PC-9 (cell line): ENCODE measurements at regions of chr19 and their contacts with region 1.

Region 1: DNA sequence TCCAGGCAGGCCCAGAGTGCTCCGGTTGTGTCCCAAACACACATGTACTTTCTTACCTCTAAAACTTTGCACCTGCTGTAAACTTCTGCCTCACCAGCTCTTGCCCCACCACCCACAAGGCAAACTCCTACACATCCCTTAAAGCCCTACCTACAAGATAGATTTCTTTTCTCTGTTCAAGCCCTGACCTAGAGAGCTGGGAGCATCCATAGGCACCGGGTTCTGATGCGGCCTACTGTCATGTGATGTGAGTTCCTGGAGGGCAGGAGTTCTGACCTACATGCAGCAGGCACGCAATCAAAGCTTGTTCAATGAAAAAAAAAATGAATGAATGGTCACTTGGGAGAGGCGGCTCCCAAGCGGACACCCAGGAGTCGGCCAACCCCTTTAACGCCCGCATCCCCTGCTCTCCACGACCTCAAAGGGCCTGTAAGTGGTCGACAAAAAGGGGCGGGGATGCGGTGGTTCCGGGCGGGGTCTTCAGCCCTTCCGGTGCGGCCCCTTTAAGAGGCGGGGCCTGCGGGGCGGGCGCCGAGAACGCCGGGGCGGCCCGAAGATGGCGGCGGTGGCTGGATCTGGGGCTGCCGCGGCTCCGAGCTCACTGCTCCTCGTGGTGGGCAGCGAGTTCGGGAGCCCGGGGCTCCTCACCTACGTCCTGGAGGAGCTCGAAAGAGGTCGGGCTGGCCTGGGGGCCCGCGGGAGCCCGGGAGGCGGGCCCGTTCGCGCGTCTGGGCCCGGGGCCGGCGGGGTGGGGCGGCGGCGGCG is at the start of gene MAP1S:
- DNase-seq: peak; percentile 52 to 58
- H3K4me3 ChIP-seq: peak within 1 kb of the TSS; percentile 93
- H3K27ac ChIP-seq: no peak within 1 kb of the TSS
- H3K4me1 ChIP-seq: peaks cover 21% of the 10 kb centered on the region
- H3K27me3 ChIP-seq: no peaks in the 10 kb centered on the region
- CTCF ChIP-seq: no peak
- total RNA-seq, gene MAP1S: 74.6 and 86.9 TPM in 2 replicates

Region 2: DNA sequence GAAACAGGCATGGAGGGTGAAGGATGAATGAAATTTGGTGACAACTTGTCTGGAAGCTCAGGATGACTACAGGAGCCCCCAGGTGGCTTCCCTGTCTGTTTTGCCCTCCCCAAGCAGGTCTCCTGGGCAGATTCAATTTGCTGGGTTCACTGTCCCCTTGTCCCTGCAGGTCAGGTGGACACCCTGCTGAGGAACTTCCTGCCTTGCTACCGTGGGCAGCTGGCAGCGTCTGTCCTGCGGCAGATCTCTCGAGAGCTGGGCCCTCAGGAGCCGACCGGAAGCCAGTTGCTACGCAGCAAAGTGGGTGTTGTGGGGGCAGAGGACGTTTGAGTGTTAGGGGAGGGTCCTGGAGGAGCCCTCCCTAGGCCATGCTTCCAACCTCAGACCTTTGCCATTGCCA is 188.5 kb before region 1 on chr19:
- CTCF ChIA-PET with region 1: no interaction called
- POLR2A ChIA-PET with region 1: interaction called, 12 read pairs
- intact Hi-C with region 1: no loop called
- DNase-seq: no peak
- H3K4me3 ChIP-seq: no peak overlapping the region
- H3K27ac ChIP-seq: no peak overlapping the region
- H3K4me1 ChIP-seq: no peaks in the 10 kb centered on the region
- H3K27me3 ChIP-seq: no peaks in the 10 kb centered on the region
- CTCF ChIP-seq: no peak

Region 3: GRCh38 chr19:17579661-17580244 is 139.4 kb before region 1 on chr19:
- CTCF ChIA-PET with region 1: no interaction called
- POLR2A ChIA-PET with region 1: no interaction called
- intact Hi-C with region 1: no loop called
- DNase-seq: peak; percentile 59 to 81
- H3K4me3 ChIP-seq: no peak overlapping the region
- H3K27ac ChIP-seq: no peak overlapping the region
- H3K4me1 ChIP-seq: no peaks in the 10 kb centered on the region
- H3K27me3 ChIP-seq: no peaks in the 10 kb centered on the region
- CTCF ChIP-seq: no peak

Region 4: DNA sequence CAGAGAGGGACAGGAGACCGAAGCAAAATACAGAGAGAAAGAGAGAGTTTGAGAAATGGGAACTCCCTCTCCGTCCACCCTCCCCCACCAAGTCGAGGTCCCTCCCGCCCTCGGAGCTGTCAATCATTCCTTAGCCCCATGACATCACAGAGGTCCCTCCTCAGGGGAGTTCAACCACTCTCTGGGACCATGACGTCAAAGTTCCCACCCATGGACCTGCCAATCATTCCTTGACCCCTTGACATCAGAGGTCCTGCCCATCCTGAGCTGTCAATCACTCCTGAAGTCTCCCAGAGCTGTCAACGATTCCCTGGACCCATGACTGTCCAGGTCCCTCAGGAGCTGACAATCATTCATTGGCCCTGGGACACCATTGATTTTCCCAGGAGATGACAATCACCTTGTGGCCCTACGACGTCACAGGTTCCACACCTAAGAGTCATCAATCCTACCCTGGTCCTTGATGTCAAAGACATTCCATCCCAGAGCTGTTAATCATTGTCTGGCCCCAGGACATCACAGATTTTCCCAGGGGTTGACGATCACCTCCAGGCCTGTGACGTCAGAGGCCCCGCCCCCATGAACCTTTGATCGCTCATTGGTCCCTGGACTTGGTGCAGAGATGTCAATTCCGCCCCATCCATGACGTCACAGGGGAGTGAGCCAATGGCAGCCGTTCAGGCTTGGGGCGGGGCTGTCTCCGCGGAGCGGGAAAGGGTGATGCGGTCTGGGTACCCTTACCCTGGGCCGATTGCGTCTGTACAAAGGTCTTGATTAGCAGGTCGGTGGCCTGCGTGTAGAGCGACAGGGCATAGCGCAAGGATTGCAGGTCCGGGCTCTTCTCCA is 101.9 kb before region 1 on chr19:
- CTCF ChIA-PET with region 1: no interaction called
- POLR2A ChIA-PET with region 1: no interaction called
- intact Hi-C with region 1: no loop called
- DNase-seq: peak in 1 of 2 experiments; percentile 81
- H3K4me3 ChIP-seq: no peak overlapping the region
- H3K27ac ChIP-seq: no peak overlapping the region
- H3K4me1 ChIP-seq: no peaks in the 10 kb centered on the region
- H3K27me3 ChIP-seq: peaks cover 14% of the 10 kb centered on the region; the same call in 1 of the 2 replicates
- CTCF ChIP-seq: no peak

Region 5: GRCh38 chr19:17803264-17803922 is 84.3 kb after region 1 on chr19:
- CTCF ChIA-PET with region 1: no interaction called
- POLR2A ChIA-PET with region 1: no interaction called
- intact Hi-C with region 1: no loop called
- DNase-seq: peak in 1 of 2 experiments; percentile 5
- H3K4me3 ChIP-seq: no peak overlapping the region
- H3K27ac ChIP-seq: no peak overlapping the region
- H3K4me1 ChIP-seq: peaks cover 15% of the 10 kb centered on the region
- H3K27me3 ChIP-seq: no peaks in the 10 kb centered on the region
- CTCF ChIP-seq: no peak